ENCODE measurements at regions of chr19 and their contacts with region 1.

Region 1: DNA sequence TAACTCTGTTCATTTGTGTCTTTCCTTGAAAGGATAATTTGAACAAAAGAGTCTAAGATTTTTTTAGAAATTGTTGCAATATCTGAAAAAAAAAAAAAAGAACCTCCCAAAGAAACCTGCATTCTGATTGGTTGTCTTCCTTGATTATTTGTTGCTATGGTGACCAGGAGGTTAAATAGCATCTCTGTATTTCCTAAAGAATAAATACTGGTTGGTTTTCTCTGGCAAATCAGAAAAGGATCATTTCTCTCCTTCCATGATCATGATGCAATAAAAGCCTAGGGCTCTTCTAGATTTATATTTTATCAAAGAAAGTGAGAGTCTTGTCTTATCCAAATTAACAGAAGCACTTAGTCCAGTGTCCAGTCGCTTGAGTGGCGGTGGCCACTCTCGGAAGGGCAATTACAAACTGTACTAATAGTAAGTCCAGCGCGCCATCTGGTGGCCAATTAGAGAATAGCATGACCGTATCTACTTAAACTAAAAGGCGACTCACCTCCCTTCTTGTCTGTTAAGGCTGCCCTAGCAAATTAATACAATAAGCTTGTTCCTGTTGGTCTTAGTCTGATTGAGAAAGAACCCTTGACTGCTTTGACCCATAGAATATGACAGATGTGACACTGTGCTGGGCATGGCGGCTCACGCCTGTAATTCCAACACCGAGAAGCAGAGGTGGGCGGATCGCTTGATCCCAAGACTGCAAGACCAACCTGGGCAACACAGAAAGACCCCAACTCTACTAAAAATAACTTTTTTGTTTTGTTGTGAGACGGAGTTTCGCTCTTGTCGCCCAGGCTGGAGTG is 47.0 kb upstream of the PNMA8B start:
- DNase-seq: peak; percentile 87
- ATAC-seq: peak; percentile 98
- H3K4me3 ChIP-seq: no peak overlapping the region
- H3K27ac ChIP-seq: no peak overlapping the region
- H3K4me1 ChIP-seq: no peaks in the 10 kb centered on the region
- H3K27me3 ChIP-seq: peaks cover 2% of the 10 kb centered on the region; the same call in 1 of the 2 replicates
- CTCF ChIP-seq: peak; percentile 83
- POLR2A ChIP-seq: no peak
- RAD21 ChIP-seq: peak; percentile 74

Region 2: DNA sequence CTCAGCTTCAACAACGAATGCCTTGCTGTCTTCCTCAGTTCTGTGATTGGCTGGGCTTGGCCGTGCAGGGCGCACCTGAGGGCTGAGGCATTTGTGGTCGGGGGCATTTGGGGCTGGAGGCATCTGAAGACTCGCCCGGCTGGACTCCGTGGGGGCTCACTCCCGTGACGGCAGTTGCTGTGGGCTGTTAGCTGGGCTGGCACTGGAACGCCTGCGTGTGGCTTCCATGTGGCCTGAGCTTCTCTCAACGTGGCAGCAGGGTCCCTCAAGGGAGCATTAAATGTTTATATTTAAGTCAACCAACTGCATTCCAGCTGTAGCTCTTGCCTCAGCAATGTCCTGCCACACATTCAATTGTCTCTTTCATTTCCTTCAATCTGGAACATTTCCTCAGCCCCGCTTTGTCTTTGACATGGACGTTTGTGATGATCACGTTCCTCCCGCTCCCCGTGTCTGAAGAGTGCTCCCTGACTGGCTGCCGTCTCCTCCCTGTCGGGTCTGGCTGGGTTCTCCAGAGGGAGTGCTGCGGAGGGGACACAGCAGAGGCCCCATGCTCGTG is 150.3 kb before region 1 on chr19:
- CTCF ChIA-PET with region 1: no interaction called
- POLR2A ChIA-PET with region 1: no interaction called
- dilution Hi-C with region 1: no loop called
- in situ Hi-C with region 1: no loop called
- intact Hi-C with region 1: loop called (anchors 1 kb)
- DNase-seq: peak; percentile 63
- ATAC-seq: peak; percentile 71
- H3K4me3 ChIP-seq: no peak overlapping the region
- H3K27ac ChIP-seq: peak overlapping the region; percentile 63
- H3K4me1 ChIP-seq: peaks cover 15% of the 10 kb centered on the region
- H3K27me3 ChIP-seq: no peaks in the 10 kb centered on the region
- CTCF ChIP-seq: no peak
- POLR2A ChIP-seq: no peak
- RAD21 ChIP-seq: no peak

Region 3: DNA sequence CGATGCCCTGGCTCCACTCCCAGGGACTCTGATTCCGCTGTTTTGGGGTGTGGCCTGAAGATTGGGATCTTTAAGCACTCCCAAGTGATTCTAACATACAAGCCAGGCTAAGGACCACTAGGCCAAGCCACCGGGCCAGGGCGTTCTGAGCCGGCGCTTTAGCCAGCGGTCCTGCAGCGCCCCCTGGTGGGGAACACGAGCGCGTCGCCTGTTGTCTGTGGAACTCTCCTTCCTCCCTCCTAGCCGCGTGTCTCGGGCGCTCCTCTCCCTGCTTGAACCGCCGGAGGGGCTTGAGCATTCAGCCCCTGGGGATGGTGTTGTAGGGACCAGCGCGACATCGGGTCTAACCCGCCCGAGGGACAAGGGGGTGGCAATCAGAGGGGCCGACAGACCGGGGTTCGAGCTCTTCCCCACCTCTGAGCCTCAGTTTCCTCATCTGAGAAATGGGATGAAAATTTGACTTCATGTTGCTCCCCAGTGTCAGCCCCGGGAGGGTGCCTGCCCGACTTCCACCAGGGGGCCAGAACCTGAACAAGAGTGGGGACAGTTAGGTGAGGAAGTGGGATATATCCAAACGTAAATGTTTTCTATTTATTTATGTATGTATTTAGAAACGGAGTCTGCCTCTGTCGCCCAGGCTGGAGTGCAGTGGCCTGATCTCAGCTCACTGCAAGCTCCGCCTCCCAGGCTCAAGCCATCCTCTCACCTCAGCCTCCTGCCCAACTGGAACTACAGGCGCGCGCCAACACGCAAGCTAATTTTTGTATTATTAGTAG is 29.0 kb before region 1 on chr19:
- CTCF ChIA-PET with region 1: interaction called, 5 read pairs
- POLR2A ChIA-PET with region 1: no interaction called
- dilution Hi-C with region 1: no loop called
- in situ Hi-C with region 1: no loop called
- intact Hi-C with region 1: loop called (anchors 1 kb)
- DNase-seq: peak; percentile 51
- ATAC-seq: peak; percentile 91
- H3K4me3 ChIP-seq: no peak overlapping the region
- H3K27ac ChIP-seq: no peak overlapping the region
- H3K4me1 ChIP-seq: no peaks in the 10 kb centered on the region
- H3K27me3 ChIP-seq: peaks cover 10% of the 10 kb centered on the region
- CTCF ChIP-seq: peak; percentile 84
- POLR2A ChIP-seq: no peak
- RAD21 ChIP-seq: peak; percentile 86

Region 4: GRCh38 chr19:46529622-46530462 is 12.8 kb before region 1 on chr19:
- CTCF ChIA-PET with region 1: interaction called, 4 read pairs
- POLR2A ChIA-PET with region 1: no interaction called
- dilution Hi-C with region 1: no loop called
- in situ Hi-C with region 1: no loop called
- intact Hi-C with region 1: loop called (anchors 1 kb)
- DNase-seq: peak; percentile 54
- ATAC-seq: peak; percentile 90
- H3K4me3 ChIP-seq: no peak overlapping the region
- H3K27ac ChIP-seq: no peak overlapping the region
- H3K4me1 ChIP-seq: no peaks in the 10 kb centered on the region
- H3K27me3 ChIP-seq: peaks cover 11% of the 10 kb centered on the region; the same call in 1 of the 2 replicates
- CTCF ChIP-seq: peak; percentile 94
- POLR2A ChIP-seq: no peak
- RAD21 ChIP-seq: peak; percentile 91